Psoas muscle (tissue), 8 donors: ENCODE measurements at regions of chr3 and their contacts with region 1.

Region 1: DNA sequence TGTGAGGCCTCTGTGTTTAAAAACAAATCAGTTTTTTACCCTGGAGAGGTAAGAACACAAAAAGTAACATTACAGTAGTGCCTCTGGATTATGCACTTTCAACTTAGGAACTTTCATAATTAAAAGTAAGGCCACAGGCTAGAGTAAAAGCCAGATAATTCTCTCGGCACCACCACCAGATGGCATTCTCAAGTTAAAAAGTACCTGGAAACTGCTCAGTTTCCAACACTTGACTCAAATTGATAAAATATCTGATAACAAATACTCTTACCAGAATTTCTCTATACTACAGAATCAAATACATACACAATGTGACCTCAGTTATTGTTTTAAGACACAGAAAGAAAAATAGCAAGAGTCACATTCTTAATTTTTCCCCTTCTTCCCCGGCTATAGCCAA is 19.9 kb downstream of the SPICE1 start:
- DNase-seq: no peak
- ATAC-seq: peak; percentile 61 to 94 (median 66)
- H3K4me3 ChIP-seq: no peak overlapping the region
- H3K27ac ChIP-seq: no peak overlapping the region
- H3K4me1 ChIP-seq: no peaks in the 10 kb centered on the region
- H3K27me3 ChIP-seq: no peaks in the 10 kb centered on the region
- CTCF ChIP-seq: peak; percentile 61

Region 2: DNA sequence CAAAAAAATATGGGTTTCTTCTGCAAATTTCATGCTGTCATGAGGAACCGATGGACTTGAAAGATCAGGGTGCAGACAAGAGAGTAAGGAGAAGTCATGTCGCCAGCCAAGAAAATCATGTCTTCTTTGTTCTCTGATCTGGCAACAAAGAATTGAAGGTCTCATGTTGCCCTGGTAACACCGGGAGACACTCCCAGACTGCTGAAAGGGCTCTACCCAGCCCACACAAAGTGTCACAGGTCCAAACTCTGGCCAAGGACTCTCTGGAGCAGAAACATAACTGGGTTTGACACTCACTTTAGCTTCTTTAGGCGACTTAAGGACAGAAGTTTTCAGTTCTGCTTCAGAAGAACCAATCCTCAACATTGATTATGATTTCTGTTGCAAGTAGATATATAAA is 80.2 kb after region 1 on chr3:
- intact Hi-C with region 1: loop called (anchors 5 to 10 kb)
- DNase-seq: no peak
- ATAC-seq: no peak
- H3K4me3 ChIP-seq: no peak overlapping the region
- H3K27ac ChIP-seq: no peak overlapping the region
- H3K4me1 ChIP-seq: no peaks in the 10 kb centered on the region
- H3K27me3 ChIP-seq: no peaks in the 10 kb centered on the region
- CTCF ChIP-seq: no peak